GM18951 (cell line): ENCODE measurements at regions of chr11 and their contacts with region 1.

Region 1: GRCh38 chr11:57493507-57494503 is 21.7 kb downstream of the SLC43A1 start:
- POLR2A ChIP-seq: no peak

Region 2: GRCh38 chr11:56817661-56818060 is 676.1 kb before region 1 on chr11:
- in situ Hi-C with region 1: no loop called
- POLR2A ChIP-seq: no peak

Region 3: DNA sequence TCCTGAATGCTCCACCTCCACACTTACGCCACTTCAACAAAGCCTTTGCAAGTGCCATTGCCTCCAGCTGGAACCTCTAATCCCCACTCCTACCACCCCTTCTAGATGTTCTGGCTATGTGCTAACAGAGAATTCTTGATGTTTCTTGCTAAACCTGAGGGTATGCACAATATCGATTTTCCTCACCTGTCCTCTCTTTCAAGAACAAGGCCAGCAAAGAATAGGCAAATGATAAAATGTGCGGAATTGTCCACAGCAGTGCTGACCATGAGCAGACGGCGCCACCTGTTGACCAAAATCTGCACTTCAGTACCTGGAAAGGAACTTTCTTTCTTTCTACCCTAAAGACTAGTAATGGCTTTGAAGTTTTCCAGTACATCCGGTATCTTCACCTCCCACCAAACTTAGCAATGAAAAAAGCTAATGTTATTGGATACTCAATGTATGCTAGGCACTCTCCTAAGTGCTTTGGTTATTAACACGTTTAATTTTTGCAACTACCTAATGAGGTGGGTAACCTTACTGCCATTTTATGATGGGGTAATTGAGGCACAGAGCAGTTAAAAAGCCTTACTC is 33.3 kb after region 1 on chr11:
- in situ Hi-C with region 1: loop called (anchors 5 kb)
- POLR2A ChIP-seq: no peak